OCI-LY7 (cell line): ENCODE measurements at regions of chr20 and their contacts with region 1.

Region 1: GRCh38 chr20:57680131-57680716 is 29.6 kb downstream of the PMEPA1 start:
- DNase-seq: peak; percentile 91
- H3K4me3 ChIP-seq: peak overlapping the region; percentile 64
- H3K27ac ChIP-seq: peak overlapping the region; percentile 99
- H3K4me1 ChIP-seq: peaks cover 92% of the 10 kb centered on the region
- CTCF ChIP-seq: no peak

Region 2: DNA sequence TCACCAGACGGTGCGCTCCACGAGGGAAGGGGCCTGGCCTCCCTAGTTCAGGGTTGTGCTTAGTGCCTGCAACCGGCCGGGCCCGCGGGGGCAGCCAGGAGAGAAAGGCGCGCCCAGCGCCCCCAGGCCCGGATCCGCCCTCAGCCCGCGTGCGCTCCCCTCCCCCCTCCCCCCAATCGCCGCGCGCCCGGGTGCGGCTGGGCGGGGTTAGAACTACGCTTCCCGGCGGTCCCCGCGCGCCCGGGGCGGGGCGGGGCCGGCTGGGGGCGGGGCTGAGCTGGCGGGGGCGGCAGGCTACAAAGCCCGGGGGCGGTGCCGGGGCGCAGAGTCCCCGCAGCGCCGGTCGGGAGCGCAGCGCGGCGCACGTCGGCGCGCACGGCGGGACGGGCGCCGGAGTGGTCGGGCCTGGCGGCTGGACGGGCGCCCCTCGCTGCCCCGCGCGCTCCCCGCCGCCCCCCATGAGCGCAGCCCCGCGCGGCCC is 289.1 kb before region 1 on chr20 and contains the start of gene RBM38:
- CTCF ChIA-PET with region 1: no interaction called
- POLR2A ChIA-PET with region 1: no interaction called
- intact Hi-C with region 1: loop called (anchors 5 kb)
- DNase-seq: peak; percentile 87
- H3K4me3 ChIP-seq: peak within 1 kb of the TSS; percentile 99
- H3K27ac ChIP-seq: peak within 1 kb of the TSS; percentile 97
- H3K4me1 ChIP-seq: peaks cover 61% of the 10 kb centered on the region
- CTCF ChIP-seq: no peak
- total RNA-seq, gene RBM38: 136 and 174 TPM in 2 replicates

Region 3: DNA sequence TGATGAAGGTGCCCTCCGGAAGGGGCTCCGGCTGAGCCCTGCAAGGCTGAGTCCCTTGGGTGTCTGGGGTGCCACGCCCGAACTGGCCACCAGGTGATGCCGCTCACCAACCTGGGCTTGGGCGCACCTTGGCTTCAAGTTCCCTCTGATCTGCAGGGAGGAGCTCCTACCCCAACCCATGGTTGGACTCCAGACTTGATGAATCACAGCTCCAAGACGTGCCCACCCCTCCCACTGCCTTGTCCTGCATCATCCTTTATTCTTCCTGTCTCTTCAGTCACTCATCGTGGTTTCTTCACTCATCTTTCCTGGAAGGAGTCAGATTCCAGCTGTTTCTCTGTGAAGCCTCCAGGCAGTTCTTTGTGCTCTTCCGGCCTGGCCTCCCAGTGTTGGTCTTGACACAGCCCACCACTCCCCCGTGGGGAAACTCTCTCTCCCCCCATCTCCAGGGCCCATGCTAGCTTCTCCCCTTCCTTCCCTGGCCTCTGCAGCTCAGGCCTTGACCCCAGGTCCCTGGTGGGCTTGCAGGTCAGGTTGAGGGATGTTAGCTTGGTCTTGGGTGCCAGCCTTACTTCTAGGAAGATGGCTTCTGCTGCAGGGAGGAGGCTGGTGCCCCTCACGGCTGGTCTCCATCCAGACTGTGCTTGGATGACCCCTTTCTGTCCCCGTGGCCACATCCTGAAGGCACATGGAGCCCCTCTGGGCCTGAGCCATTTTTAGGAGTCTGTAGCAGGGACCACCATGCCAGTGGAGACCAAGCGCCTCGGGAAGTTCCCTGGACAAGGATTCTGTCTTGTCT is 57.4 kb before region 1 on chr20:
- CTCF ChIA-PET with region 1: interaction called, 7 read pairs
- POLR2A ChIA-PET with region 1: interaction called, 14 read pairs
- intact Hi-C with region 1: loop called (anchors 1 kb)
- DNase-seq: peak; percentile 83
- H3K4me3 ChIP-seq: no peak overlapping the region
- H3K27ac ChIP-seq: no peak overlapping the region
- H3K4me1 ChIP-seq: peaks cover 62% of the 10 kb centered on the region
- CTCF ChIP-seq: peak; percentile 95

Region 4: DNA sequence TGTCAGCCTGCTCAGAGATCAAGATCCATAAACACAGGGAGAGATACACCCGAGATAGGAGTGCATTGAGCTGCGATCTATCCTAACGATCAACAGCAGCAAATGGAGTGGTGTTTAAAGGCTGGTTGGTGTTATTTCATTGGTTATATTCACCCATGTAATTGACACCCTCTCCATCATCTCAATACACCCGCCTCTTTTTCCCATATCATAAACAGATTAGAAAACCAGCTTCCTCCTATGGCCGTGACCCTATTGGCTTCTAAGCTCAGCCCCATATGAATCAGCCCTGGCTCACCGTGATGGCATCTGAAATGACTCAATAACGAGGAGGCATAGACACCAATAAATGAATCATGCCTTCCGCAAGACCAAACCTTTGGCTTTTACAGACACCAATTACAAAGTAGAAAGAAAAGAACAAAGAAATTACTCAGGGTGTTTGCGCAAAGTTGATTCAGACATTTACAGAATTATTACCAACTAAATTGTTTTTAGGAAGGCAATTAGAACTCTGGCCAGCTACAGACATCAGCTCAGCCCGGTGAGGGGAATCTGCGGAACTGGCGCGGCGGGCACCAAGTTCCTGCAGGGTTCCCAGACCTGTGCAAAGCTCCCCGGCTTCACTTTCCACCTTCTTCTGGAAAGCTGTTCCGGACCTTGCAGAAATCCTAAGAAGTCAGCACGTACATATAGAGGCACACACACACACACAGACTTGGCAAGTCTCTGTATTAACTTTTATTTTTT is 18.1 kb after region 1 on chr20:
- CTCF ChIA-PET with region 1: interaction called, 15 read pairs
- POLR2A ChIA-PET with region 1: interaction called, 15 read pairs
- intact Hi-C with region 1: loop called (anchors 1 kb)
- DNase-seq: no peak
- H3K4me3 ChIP-seq: no peak overlapping the region
- H3K27ac ChIP-seq: no peak overlapping the region
- H3K4me1 ChIP-seq: peaks cover 67% of the 10 kb centered on the region
- CTCF ChIP-seq: no peak